Activated CD4-positive, alpha-beta T cell treated with anti-CD3 and anti-CD28 coated beads for 36 hours (primary cell): ENCODE measurements at regions of chr20 and their contacts with region 1.

Region 1: GRCh38 chr20:48828022-48828743 is 384 bp upstream of the PREX1 start:
- DNase-seq: peak; percentile 78
- ATAC-seq: peak; percentile 14
- H3K4me3 Mint-ChIP-seq: peak overlapping the region; percentile 66
- H3K27ac Mint-ChIP-seq: peak overlapping the region; percentile 57
- H3K4me1 Mint-ChIP-seq: peaks cover 38% of the 10 kb centered on the region
- H3K27me3 Mint-ChIP-seq: peaks cover 21% of the 10 kb centered on the region

Region 2: GRCh38 chr20:47343007-47343472 is 1485.1 kb before region 1 on chr20:
- CTCF ChIA-PET with region 1: no interaction called
- POLR2A ChIA-PET with region 1: no interaction called
- intact Hi-C with region 1: no loop called
- DNase-seq: no peak
- ATAC-seq: no peak
- H3K4me3 Mint-ChIP-seq: no peak overlapping the region
- H3K27ac Mint-ChIP-seq: no peak overlapping the region
- H3K4me1 Mint-ChIP-seq: peaks cover 34% of the 10 kb centered on the region
- H3K27me3 Mint-ChIP-seq: no peaks in the 10 kb centered on the region

Region 3: DNA sequence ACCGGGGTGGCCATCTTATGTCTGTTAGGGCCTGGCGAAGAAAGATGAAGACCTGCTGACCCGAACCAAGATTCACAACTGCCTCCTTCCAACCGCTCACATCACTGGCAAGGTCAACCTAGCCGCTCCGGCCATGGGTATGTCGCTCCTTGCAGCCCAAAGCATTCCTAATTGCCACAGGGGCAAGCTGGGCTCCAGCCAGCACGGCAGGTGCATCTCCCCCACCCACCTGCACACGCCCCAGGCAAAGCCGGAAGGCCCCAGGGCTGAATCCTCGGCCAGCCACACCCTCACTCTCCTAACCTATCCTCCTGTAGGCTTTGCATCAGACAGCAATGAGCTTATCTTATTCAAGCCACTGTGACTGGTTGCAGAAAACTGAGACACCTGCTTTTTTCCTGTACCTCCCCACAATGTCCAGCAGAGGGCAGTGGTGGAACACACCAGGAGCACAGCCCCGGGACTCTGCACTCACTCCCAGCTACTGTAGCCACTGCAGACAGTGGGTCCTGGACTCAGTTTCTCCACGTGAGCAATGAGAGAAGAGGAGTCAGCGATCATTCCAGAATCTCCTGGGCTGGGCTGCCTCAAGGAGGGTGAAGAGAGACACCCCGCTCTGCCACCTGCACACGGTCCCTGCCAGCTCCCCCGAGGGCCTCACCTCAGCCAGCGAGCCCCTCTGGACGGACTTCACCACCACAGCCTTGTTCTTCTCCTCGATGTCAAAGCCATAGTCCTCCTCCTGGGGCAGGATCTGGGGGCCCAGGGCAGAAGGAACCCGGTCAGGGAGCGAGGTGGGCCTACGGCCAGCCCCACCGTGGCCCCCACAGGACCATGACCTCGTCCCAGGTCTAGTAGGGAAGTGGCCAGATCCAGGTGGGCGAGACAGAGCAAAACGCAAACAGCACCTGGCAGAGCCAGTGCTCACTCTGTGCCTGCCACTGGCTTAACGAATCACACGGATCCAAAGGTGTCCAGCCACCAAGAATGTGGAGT is 170.4 kb before region 1 on chr20:
- CTCF ChIA-PET with region 1: interaction called, 5 read pairs
- POLR2A ChIA-PET with region 1: no interaction called
- intact Hi-C with region 1: loop called in 1 of 2 experiments (anchors 1 kb)
- DNase-seq: peak; percentile 76
- ATAC-seq: peak; percentile 94
- H3K4me3 Mint-ChIP-seq: no peak overlapping the region
- H3K27ac Mint-ChIP-seq: no peak overlapping the region
- H3K4me1 Mint-ChIP-seq: no peaks in the 10 kb centered on the region
- H3K27me3 Mint-ChIP-seq: no peaks in the 10 kb centered on the region

Region 4: GRCh38 chr20:48679550-48680187 is 148.5 kb before region 1 on chr20:
- CTCF ChIA-PET with region 1: no interaction called
- POLR2A ChIA-PET with region 1: no interaction called
- intact Hi-C with region 1: no loop called
- DNase-seq: no peak
- ATAC-seq: no peak
- H3K4me3 Mint-ChIP-seq: no peak overlapping the region
- H3K27ac Mint-ChIP-seq: no peak overlapping the region
- H3K4me1 Mint-ChIP-seq: no peaks in the 10 kb centered on the region
- H3K27me3 Mint-ChIP-seq: no peaks in the 10 kb centered on the region

Region 5: GRCh38 chr20:48738399-48739304 is 89.5 kb before region 1 on chr20:
- CTCF ChIA-PET with region 1: no interaction called
- POLR2A ChIA-PET with region 1: interaction called, 3 read pairs
- intact Hi-C with region 1: loop called in 1 of 2 experiments (anchors 1 kb)
- DNase-seq: peak; percentile 86
- ATAC-seq: peak; percentile 91
- H3K4me3 Mint-ChIP-seq: peak overlapping the region; percentile 2
- H3K27ac Mint-ChIP-seq: peak overlapping the region; percentile 88
- H3K4me1 Mint-ChIP-seq: peaks cover 41% of the 10 kb centered on the region
- H3K27me3 Mint-ChIP-seq: no peaks in the 10 kb centered on the region

Region 6: DNA sequence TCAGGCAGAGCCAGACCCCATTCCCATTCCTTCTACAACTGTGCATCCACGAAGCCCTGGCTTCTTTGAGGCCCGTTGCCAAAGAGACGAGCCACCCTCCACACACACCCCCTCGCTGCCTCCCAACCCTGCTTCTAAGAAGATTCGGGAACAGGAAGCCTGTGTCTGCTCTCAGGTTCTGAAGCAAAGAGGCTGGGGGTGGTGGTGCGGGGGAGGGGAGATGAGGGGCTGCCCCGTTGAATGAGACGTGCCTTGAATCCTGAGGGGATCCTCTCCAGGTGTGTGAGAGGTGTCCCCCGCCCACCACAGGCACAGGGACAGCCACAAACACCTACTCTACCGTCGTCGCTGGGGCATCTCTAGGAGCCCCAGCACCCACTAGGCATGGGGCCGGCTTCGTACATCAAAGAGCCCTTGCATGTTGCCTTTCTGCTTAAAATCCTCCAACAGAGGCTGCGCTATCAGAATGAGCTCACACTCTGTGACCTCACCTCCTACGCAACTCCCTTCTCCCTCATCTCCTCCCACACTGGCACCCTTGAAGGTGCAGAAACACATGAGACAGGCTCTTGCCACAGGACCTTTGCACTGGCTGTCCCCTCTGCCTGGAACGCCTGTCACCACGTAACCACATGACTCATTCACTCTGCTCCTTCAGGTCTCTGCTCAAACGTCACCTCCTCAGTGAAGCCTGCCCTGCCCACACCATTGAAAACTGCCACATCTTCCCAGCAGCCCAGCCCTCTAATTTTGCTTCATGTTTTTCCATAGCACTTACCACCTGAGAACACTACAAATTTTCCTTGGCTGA is 58.9 kb before region 1 on chr20:
- CTCF ChIA-PET with region 1: interaction called, 4 read pairs
- POLR2A ChIA-PET with region 1: interaction called, 3 read pairs
- intact Hi-C with region 1: loop called (anchors 1 kb)
- DNase-seq: peak; percentile 96
- ATAC-seq: peak; percentile 90
- H3K4me3 Mint-ChIP-seq: peak overlapping the region; percentile 48
- H3K27ac Mint-ChIP-seq: peak overlapping the region; percentile 81
- H3K4me1 Mint-ChIP-seq: peaks cover 80% of the 10 kb centered on the region
- H3K27me3 Mint-ChIP-seq: no peaks in the 10 kb centered on the region

Region 7: DNA sequence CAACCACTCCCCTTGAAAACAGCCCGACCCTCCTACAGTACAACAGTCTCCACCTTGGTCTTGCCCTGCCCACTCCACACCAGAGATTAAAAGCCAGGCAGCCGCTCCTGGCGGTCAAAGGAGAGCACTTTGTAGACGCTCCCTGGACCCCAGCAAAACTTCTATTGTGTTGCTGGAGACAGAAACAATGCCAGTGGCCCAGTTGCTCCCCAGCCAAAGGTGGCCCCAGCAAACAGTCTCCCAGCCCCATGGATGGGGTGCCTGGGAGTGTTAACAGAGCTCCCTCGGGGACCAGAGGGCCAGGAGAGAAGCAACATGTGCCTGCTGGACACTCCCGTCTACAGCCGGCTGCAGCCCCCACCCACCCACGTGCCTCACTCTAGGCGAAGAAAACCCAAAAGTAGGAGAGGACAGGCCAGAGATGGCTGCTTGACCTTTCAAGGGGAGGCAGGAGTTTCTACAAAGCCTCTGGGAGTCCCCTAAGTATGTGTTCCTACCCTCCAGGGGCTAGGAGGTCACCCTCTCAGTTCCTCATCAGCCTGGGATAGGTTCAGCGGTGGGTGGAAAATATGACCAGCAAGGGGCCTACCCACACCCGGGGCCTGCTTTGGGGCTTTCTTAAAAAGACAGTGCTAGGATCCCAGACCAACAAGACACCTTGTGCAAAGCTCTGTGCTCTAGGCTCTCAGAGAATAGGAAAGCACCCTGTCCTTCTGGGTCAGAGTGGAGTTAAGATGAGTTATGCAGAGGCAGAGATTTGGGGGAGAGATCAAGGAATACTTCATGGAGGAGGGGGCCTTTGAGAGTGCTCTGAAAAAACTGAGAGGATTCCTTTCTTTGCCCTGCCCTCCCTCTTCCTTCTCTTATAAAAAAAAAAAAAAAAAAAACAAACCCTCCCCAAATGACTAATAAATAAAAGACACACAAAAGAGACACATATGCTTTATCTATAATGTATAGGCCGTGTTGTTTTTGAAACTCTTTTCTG is 18.6 kb after region 1 on chr20:
- CTCF ChIA-PET with region 1: no interaction called
- POLR2A ChIA-PET with region 1: no interaction called
- intact Hi-C with region 1: loop called in 1 of 2 experiments (anchors 1 kb)
- DNase-seq: peak; percentile 85
- ATAC-seq: peak; percentile 93
- H3K4me3 Mint-ChIP-seq: no peak overlapping the region
- H3K27ac Mint-ChIP-seq: peak overlapping the region; percentile 89
- H3K4me1 Mint-ChIP-seq: peaks cover 23% of the 10 kb centered on the region
- H3K27me3 Mint-ChIP-seq: no peaks in the 10 kb centered on the region

Region 8: GRCh38 chr20:48921151-48921898 is 93.1 kb after region 1 on chr20 and contains the start of gene ARFGEF2:
- CTCF ChIA-PET with region 1: interaction called, 3 read pairs
- POLR2A ChIA-PET with region 1: no interaction called
- intact Hi-C with region 1: loop called in 1 of 2 experiments (anchors 1 kb)
- DNase-seq: peak; percentile 95
- ATAC-seq: peak; percentile 95
- H3K4me3 Mint-ChIP-seq: peak within 1 kb of the TSS; percentile 96
- H3K27ac Mint-ChIP-seq: peak within 1 kb of the TSS; percentile 96
- H3K4me1 Mint-ChIP-seq: peaks cover 45% of the 10 kb centered on the region
- H3K27me3 Mint-ChIP-seq: no peaks in the 10 kb centered on the region
- total RNA-seq, gene ARFGEF2: 19.3 to 20.5 TPM